Cardiac septum (tissue), 1 donor: ENCODE measurements at regions of chr16 and their contacts with region 1.

Region 1: GRCh38 chr16:10911267-10911666 is 31.0 kb downstream of the DEXI start:
- DNase-seq: no peak

Region 2: DNA sequence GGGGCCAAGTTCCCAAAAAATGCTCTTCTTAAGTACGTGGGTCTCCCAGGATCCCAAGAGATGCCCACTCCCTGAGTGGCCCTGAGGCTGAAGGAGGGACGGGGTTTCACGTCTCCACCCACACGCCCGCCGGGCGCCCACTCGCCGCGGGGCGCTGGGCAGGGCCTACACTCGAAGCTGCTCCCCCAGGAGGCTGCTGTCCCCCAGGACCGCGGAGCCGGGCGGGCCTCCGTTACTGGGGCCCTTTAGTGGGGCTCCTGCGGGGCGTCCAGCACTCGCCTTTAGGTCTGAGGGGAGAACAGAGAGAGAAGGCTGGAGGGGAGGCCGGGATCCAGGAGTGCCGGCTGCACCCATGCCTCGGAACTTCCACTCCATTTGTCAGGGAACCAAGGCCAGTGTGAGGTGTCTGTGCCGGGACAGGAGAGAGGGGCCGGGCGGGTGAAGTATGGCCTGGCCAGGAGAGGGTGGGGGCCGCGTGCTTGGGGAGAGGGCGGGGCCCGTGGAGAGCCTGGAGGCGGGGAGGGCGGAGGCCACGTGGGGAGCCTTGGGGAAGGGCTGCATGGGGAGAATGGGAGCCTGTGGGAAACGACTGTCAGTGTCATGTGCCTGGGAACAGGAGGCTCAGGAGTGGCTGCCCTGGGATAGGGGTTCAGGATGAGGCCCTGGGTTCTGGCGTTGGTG is 148.8 kb before region 1 on chr16:
- intact Hi-C with region 1: loop called (anchors 5 kb)
- DNase-seq: no peak